Gastrocnemius medialis (tissue), 4 donors: ENCODE measurements at regions of chr6 and their contacts with region 1.

Region 1: GRCh38 chr6:4313044-4313686 is 177.8 kb upstream of the ECI2 start:
- DNase-seq: no peak
- ATAC-seq: peak in 1 of 2 donors; percentile 74
- H3K4me3 ChIP-seq: no peak overlapping the region
- H3K27ac ChIP-seq: peak overlapping the region in 2 of 4 donors; percentile 17 to 27
- H3K4me1 ChIP-seq: peaks cover 13 to 17% of the 10 kb centered on the region in 2 donors
- H3K27me3 ChIP-seq: no peaks in the 10 kb centered on the region
- CTCF ChIP-seq: peak in 3 of 5 experiments; percentile 32 to 49 (median 41)
- POLR2A ChIP-seq: no peak

Region 2: DNA sequence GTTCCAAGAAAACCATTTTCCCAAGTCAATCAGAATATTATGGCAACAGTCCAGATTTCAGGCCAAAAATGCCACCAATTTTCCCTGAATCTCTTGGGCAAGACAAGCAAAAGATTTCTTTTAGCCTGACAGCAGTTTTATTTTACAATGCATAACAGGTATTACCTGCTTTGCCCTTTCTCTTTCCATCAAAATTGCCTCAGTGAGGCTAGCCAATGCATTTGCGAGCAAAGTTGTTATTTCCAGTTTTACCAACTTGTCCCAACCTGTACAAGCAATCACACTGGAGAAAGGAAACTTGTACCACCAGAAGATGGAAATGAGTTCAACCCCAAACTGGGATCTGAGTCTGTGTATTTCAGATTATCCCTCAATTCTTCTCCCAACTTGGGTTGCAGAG is 183.1 kb after region 1 on chr6:
- in situ Hi-C with region 1: no loop called
- intact Hi-C with region 1: no loop called
- DNase-seq: no peak
- ATAC-seq: no peak
- H3K4me3 ChIP-seq: no peak overlapping the region
- H3K27ac ChIP-seq: no peak overlapping the region
- H3K4me1 ChIP-seq: no peaks in the 10 kb centered on the region
- H3K27me3 ChIP-seq: no peaks in the 10 kb centered on the region
- CTCF ChIP-seq: no peak
- POLR2A ChIP-seq: no peak

Region 3: GRCh38 chr6:4805553-4806336 is 492.6 kb after region 1 on chr6:
- in situ Hi-C with region 1: no loop called
- intact Hi-C with region 1: loop called (anchors 5 kb)
- DNase-seq: peak; percentile 11 to 64
- ATAC-seq: peak; percentile 68 to 82
- H3K4me3 ChIP-seq: no peak overlapping the region
- H3K27ac ChIP-seq: no peak overlapping the region
- H3K4me1 ChIP-seq: peaks cover 16 to 35% of the 10 kb centered on the region in 2 donors
- H3K27me3 ChIP-seq: no peaks in the 10 kb centered on the region
- CTCF ChIP-seq: peak; percentile 34 to 69 (median 47)
- POLR2A ChIP-seq: no peak

Region 4: DNA sequence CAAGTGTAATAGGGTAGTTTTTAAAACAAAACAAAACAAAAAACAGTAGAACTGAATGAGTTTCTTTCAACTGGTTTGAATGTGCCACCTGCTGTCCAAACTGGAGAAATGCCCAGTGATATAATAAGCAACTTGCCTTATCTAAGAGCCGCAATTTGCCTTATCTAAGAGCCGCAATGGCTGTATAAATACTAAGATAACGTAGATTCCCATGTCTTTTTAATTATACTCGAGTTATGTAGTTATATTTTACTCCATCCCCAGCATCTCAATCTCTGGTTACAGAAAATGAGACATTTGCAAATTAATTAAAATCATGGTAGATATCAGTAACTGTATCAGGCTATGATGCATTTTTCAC is 623.5 kb after region 1 on chr6:
- in situ Hi-C with region 1: loop called in 3 of 4 experiments (anchors 25 kb)
- intact Hi-C with region 1: loop called (anchors 10 kb)
- DNase-seq: no peak
- ATAC-seq: no peak
- H3K4me3 ChIP-seq: no peak overlapping the region
- H3K27ac ChIP-seq: no peak overlapping the region
- H3K4me1 ChIP-seq: peaks cover 12 to 22% of the 10 kb centered on the region in 2 donors
- H3K27me3 ChIP-seq: no peaks in the 10 kb centered on the region
- CTCF ChIP-seq: peak; percentile 36 to 67 (median 59)
- POLR2A ChIP-seq: no peak

Region 5: DNA sequence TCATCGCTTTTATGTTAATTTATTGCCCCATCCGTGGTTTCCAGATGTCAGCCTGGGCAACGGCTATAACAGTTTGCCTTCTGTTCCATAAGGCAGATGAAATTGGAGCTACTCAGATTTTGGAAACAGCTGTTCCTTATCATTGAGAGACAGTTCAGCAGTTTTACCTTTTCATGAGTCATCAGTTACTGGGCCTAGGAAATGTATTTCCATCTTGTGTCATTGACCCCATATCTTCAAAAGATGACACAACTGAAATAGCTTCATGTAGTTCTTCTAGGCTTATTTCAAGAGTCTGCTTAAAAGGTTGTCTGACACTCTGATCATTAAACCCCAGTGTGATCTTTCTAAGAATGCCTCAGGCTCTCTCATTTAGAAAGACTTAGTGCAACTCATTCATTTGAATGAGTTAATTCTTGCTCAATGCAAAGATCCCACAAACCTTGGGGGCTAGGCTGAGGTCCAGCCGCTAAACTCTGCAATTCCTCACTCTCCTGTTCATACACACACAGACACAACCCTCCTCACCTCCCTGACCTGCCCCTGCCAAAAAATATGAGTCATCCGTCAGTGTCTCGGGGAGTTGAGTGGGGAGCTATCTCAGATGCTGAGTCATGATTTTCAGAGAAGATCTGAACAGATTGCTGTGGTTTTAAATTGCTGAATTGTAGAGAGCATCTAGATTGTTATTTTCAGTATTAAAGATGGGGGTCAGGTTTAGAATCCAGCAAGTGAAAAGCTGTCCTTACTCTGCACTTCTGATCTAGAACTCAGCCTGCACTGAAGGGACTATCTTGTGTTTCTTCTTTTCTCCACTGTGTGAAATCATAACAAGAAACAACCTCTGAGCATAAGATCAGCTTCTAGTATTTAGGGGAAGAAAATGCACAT is 628.9 kb after region 1 on chr6:
- in situ Hi-C with region 1: loop called in 3 of 4 experiments (anchors 25 kb)
- intact Hi-C with region 1: loop called (anchors 10 kb)
- DNase-seq: peak; percentile 24 to 76
- ATAC-seq: peak; percentile 88 to 98
- H3K4me3 ChIP-seq: no peak overlapping the region
- H3K27ac ChIP-seq: peak overlapping the region; percentile 42 to 64 (median 48)
- H3K4me1 ChIP-seq: peaks cover 17 to 20% of the 10 kb centered on the region in 2 donors
- H3K27me3 ChIP-seq: no peaks in the 10 kb centered on the region
- CTCF ChIP-seq: no peak
- POLR2A ChIP-seq: no peak

Region 6: DNA sequence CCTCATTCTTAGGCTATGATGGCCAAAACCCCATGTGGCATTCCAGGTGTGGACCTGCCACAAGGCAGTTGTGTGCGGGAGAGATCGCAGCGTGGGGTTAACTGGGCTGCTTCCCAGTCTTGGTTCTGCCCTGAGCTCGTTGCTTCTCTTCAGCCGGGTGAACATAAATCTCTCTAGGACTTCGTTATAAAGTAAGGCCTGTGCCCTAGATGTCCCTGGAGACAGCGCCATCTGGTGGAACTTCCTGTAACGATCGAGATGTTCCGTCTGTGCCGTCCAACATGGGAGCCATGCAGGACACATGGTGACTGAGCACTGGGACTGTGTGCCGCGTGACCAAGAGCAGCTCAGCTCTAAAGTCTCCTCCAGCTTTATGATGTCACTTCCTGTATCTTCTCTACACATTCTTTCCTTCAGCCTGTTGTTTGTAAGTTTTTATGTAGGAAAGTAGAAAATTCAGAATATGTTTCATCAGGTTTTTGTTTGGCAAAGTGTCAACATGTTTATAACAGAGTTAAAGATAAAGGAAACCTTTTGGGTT is 717.5 kb after region 1 on chr6:
- in situ Hi-C with region 1: no loop called
- intact Hi-C with region 1: loop called (anchors 10 kb)
- DNase-seq: peak; percentile 38 to 80
- ATAC-seq: peak; percentile 38 to 79
- H3K4me3 ChIP-seq: no peak overlapping the region
- H3K27ac ChIP-seq: no peak overlapping the region
- H3K4me1 ChIP-seq: peaks cover 0 to under 1% of the 10 kb centered on the region in 2 donors
- H3K27me3 ChIP-seq: no peaks in the 10 kb centered on the region
- CTCF ChIP-seq: peak; percentile 38 to 67 (median 53)
- POLR2A ChIP-seq: no peak